Aorta (tissue), 5 donors: ENCODE measurements at regions of chr6 and their contacts with region 1.

Region 1: DNA sequence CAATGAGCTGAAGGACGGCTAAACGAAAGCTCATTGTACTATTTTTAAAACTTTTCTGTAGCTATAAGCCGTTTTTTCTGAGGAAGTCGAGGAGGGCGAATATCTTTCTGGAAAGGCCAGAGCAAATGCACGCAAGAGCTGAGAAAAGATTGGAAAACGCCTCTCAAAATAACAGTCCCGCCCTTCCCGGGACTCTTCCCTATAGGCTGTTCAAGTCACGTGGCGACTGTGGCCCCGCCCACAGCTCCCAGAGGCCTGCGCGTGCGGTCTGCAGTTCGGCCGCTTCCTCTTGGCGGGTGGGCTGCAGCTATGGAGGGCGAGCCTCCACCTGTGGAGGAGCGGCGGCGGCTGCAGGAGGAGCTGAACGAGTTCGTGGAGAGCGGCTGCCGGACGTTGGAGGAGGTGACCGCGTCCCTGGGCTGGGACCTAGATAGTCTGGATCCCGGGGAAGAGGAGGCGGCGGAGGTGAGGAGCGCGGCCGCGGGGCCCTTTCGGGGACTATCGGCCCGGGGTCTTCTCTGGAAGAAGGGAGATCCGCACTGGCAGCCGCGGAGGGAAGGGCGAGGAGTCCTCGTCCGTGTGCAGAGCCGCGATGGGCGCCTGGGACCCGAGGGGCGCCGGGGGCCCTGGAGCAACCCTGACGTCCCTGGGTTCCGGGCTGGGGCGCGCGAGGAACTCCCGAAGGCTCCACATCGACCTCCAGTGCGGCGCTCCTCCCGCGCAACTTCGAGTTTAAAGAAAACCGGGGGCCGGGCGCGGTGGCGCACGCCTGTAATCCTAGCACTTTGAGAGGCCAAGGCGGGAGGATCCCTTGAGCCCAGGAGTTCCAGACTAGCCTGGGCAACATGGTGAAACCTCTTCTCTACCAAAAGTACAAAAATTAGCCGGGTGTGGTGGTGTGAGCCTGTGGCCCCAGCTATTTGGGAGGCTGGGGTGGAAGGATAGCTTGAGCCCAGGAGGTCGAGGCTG is at the start of gene SNRNP48:
- DNase-seq: peak; percentile 97 to 98
- ATAC-seq: peak; percentile 99
- H3K4me3 ChIP-seq: peak within 1 kb of the TSS; percentile 77 to 83
- H3K27ac ChIP-seq: peak within 1 kb of the TSS in 1 of 2 donors; percentile 17
- H3K4me1 ChIP-seq: no peaks in the 10 kb centered on the region
- H3K27me3 ChIP-seq: no peaks in the 10 kb centered on the region
- total RNA-seq, gene SNRNP48: 8.0 to 15.2 TPM

Region 2: GRCh38 chr6:7295916-7296315 is 294.3 kb before region 1 on chr6:
- intact Hi-C with region 1: loop called (anchors 5 to 10 kb)
- DNase-seq: no peak
- ATAC-seq: no peak
- H3K4me3 ChIP-seq: no peak overlapping the region
- H3K27ac ChIP-seq: no peak overlapping the region
- H3K4me1 ChIP-seq: no peaks in the 10 kb centered on the region
- H3K27me3 ChIP-seq: no peaks in the 10 kb centered on the region

Region 3: GRCh38 chr6:7300926-7301325 is 289.3 kb before region 1 on chr6:
- intact Hi-C with region 1: loop called (anchors 5 to 10 kb)
- DNase-seq: no peak
- ATAC-seq: no peak
- H3K4me3 ChIP-seq: no peak overlapping the region
- H3K27ac ChIP-seq: no peak overlapping the region
- H3K4me1 ChIP-seq: no peaks in the 10 kb centered on the region
- H3K27me3 ChIP-seq: no peaks in the 10 kb centered on the region

Region 4: DNA sequence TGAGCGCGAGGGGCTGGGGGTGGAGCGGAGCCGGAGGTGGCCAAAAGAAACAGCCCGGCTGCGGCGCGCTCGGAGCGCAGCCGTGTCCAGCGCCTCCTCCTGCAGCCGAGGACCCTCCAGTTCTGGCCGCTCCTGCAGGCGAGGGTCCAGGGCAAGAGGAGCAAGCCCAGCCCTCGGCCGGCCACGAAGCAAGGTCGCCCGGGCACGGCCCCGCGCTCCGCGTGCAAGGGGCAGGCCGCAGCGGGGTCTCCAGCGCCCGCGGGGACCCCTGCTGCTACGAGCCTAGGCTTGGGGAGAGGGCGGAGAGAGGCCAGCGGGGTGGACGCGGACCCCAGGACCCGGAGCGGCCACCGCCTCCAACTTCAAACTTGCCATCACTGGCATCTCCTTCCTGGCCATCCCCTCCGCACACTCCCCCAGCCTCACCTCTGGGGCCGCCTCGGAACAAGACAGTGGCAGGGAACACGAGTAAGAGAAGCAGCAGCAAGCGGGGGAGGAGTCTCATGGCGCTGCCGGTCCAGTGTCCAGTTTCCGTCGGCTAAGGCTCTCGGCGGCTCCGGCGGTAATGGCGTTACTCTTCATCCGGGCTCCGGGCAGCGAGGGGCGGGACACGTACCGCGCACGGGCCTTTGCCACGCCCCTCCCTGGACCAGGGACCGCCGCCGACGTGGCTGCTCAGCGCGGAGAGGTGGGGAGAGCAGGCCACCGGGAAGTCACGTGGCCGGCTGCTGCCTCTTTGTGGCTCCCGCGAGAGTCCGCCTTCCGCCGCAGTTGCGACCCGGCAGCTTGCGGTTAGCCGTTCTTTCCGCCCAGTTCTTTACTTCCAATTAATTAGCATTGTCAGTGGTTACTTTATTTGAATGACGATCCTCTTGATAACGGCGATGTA is 277.4 kb before region 1 on chr6 and contains the start of gene SSR1:
- intact Hi-C with region 1: loop called (anchors 5 to 10 kb)
- DNase-seq: peak; percentile 99
- ATAC-seq: peak; percentile 100
- H3K4me3 ChIP-seq: peak within 1 kb of the TSS; percentile 54 to 69
- H3K27ac ChIP-seq: peak within 1 kb of the TSS; percentile 39 to 59
- H3K4me1 ChIP-seq: peaks cover 0 to 1% of the 10 kb centered on the region in 2 donors
- H3K27me3 ChIP-seq: no peaks in the 10 kb centered on the region
- total RNA-seq, gene SSR1: 114 to 125 TPM

Region 5: GRCh38 chr6:7389451-7390225 is 200.6 kb before region 1 on chr6 and contains the starts of genes CAGE1 and RIOK1:
- intact Hi-C with region 1: loop called (anchors 5 kb)
- DNase-seq: peak; percentile 97 to 99
- ATAC-seq: peak; percentile 100
- H3K4me3 ChIP-seq: peak within 1 kb of the TSS; percentile 51 to 85
- H3K27ac ChIP-seq: peak within 1 kb of the TSS in 1 of 2 donors; percentile 89
- H3K4me1 ChIP-seq: peaks cover 0 to 12% of the 10 kb centered on the region in 2 donors
- H3K27me3 ChIP-seq: no peaks in the 10 kb centered on the region
- total RNA-seq, gene CAGE1: not detected
- total RNA-seq, gene RIOK1: 20.3 to 20.9 TPM

Region 6: DNA sequence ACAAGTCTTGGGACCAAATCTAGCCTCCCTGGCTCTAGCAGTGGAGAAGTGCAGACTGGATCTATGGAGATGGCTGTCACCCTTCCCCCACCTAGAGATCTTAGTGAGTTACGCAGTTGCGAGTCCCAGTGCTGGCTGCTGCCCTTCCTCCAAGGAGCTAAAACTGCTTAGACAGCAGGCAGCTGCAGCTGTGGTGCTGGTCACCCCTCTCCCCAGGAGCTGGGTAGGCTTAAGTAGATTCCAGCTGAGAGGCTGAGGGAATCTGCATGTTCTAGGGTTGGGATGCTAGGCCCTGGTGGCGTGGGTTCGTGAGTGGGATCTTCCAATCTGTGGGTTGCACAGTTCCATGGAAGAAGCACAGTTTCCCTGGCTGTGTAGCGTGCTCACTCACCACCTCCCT is 724.9 kb after region 1 on chr6:
- intact Hi-C with region 1: no loop called
- DNase-seq: no peak
- ATAC-seq: no peak
- H3K4me3 ChIP-seq: no peak overlapping the region
- H3K27ac ChIP-seq: no peak overlapping the region
- H3K4me1 ChIP-seq: no peaks in the 10 kb centered on the region
- H3K27me3 ChIP-seq: peaks cover 0 to 1% of the 10 kb centered on the region in 2 donors